Activated T-helper 1 cell treated with anti-CD3 and anti-CD28 coated beads, Interleukin-12 subunit alpha, Interleukin-12 subunit beta, Interleukin-2, Interleukin-4 antibody, amounts not matched to agents 30 ng/mL and 10 ng/mL and 1 ng/mL, durations not matched to agents 14 hours and 24 hours and 36 hours (primary cell): ENCODE measurements at regions of chr10 and their contacts with region 1.

Region 1: DNA sequence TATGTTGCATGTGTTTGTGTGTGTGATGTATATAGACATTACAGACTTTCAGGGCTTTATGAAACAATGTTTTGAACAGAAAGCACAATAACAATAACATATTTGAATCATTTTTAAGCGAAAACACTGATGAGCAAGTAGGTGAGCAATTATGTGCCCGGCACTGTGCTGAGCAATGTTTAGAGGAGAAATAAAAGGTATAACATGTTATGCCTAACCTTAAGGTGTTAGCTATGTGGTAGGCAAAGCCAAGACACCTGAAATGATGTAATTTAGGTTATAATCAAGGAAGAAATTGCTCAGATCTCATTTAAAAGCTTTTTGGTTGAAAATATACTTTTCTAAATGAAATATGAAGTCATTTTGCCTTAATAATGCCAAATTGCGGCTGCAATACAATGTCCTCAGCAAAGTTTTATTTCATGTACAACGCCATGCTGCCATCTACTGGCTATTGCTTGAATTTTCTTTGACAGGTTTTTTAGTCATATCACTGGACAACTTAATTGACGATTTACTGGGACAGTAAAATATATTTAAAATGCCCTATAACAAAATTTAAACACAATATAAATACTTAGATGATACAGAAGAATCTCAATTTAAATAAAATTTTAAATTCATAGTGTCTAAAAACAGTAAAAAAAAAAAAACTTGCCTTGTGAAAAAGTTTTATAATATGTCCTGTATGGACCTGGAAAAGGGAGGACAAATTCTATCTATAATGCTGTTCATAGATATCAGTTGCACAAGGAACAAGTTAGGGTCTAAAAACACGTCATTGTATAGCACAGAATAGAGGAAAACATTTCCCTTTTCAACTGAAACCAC is 131.1 kb upstream of the CDK1 start:
- DNase-seq: peak; percentile 18
- H3K4me3 Mint-ChIP-seq: no peak overlapping the region
- H3K27ac Mint-ChIP-seq: no peak overlapping the region
- H3K4me1 Mint-ChIP-seq: peaks cover 60% of the 10 kb centered on the region
- H3K27me3 Mint-ChIP-seq: no peaks in the 10 kb centered on the region

Region 2: DNA sequence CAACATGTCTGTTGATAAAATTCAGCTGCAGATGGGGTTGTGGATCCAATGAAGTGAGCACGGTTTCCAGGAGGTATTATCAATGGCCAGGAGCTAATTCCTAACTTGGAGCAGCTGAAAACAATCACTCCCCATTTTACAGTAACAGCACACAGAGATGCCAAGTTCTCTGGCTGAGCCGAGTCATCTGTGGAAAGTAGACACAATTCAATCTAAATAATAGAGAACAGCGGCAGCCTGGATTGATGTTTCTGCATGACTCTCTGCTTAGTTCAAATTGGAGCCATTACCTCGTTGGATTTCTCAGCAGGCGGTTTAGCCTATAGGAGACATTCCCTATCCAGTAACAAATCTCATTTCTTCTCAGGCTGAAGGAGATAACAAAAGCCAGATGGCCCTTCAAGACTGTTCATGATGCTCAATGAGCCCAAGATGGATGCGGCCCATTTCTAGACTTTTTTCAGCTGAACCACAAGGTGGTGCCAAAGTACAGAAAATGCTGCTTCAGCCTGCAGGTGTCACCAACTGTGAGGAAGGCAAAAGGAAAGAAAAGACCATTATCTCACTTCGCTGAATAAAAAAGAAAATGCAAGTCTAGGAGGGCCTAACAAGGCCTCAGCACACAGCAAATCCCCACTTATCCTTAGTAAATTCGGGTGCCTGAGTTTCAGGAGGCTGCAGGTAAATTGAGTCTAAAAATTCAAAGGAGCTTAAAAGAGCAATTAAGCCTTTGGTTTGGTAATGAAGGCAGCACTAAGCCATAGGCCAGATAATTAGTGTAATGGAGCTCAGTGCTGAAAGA is 1021.3 kb before region 1 on chr10:
- intact Hi-C with region 1: loop called (anchors 2 kb)
- DNase-seq: peak; percentile 36
- H3K4me3 Mint-ChIP-seq: no peak overlapping the region
- H3K27ac Mint-ChIP-seq: no peak overlapping the region
- H3K4me1 Mint-ChIP-seq: peaks cover 6% of the 10 kb centered on the region
- H3K27me3 Mint-ChIP-seq: peaks cover 18% of the 10 kb centered on the region

Region 3: DNA sequence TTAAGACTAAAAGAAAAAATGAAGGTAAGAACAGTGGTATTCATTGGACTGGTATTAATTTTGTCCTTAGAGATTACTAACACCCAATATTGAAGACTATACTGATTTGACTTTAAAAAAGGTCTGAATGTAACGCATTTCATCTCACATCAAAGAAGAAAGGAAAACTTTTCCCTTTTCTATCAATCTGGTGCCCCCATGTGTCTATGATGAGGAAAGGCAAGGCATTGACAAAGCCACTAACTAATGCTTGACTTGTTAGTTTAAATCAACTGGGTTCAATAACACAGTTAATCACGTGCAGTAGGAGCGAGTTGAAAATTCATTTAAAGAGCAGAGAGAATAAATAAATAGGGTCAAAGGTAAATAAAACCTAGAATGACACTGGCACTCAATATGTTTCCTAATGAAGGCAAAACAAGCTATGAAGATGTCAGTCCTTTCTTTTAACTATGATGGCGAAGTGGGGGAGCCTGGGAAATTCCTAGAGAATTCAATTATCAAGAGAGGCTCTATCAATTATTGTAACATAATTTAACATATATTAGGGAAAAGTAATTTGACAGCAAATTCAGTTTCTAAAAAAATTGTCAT is 438.4 kb before region 1 on chr10:
- intact Hi-C with region 1: loop called (anchors 1 kb)
- DNase-seq: no peak
- H3K4me3 Mint-ChIP-seq: no peak overlapping the region
- H3K27ac Mint-ChIP-seq: no peak overlapping the region
- H3K4me1 Mint-ChIP-seq: peaks cover 36% of the 10 kb centered on the region
- H3K27me3 Mint-ChIP-seq: no peaks in the 10 kb centered on the region

Region 4: DNA sequence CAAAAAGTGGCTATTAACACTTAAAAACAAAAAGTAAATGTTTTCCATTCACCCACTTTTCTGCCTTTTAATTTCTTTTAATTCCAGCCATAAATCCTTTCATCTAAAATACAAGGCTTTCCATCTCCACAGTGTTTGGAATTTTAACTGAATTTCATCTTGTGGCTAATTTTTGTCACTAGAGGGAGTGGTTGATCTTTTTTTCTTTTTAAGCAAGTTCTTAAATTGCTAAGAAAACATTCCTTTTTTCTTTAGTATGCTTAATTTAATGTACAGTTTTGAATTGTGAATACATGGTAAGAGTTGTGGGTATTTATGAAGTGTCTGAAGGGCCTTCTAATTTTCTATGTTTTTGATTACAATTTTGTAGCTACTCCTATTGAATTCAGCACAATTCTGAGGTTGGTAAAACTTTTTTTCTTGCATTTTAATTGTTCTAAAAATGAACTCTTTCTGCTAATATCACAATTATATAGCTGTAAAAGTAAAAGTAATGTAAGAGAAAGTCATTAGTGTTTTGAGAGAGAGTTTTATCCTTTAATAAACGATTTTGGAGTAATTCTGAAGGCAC is 202.6 kb before region 1 on chr10:
- intact Hi-C with region 1: loop called (anchors 1 kb)
- DNase-seq: no peak
- H3K4me3 Mint-ChIP-seq: no peak overlapping the region
- H3K27ac Mint-ChIP-seq: no peak overlapping the region
- H3K4me1 Mint-ChIP-seq: peaks cover 16% of the 10 kb centered on the region
- H3K27me3 Mint-ChIP-seq: peaks cover 2% of the 10 kb centered on the region

Region 5: GRCh38 chr10:60572511-60573194 is 74.5 kb before region 1 on chr10:
- intact Hi-C with region 1: loop called (anchors 2 kb)
- DNase-seq: peak; percentile 21
- H3K4me3 Mint-ChIP-seq: peak overlapping the region; percentile 92
- H3K27ac Mint-ChIP-seq: peak overlapping the region; percentile 87
- H3K4me1 Mint-ChIP-seq: peaks cover 68% of the 10 kb centered on the region
- H3K27me3 Mint-ChIP-seq: no peaks in the 10 kb centered on the region

Region 6: GRCh38 chr10:60611291-60611747 is 35.9 kb before region 1 on chr10:
- intact Hi-C with region 1: no loop called
- DNase-seq: no peak
- H3K4me3 Mint-ChIP-seq: peak overlapping the region; percentile 1
- H3K27ac Mint-ChIP-seq: peak overlapping the region; percentile 49
- H3K4me1 Mint-ChIP-seq: peaks cover 30% of the 10 kb centered on the region
- H3K27me3 Mint-ChIP-seq: no peaks in the 10 kb centered on the region

Region 7: GRCh38 chr10:60722623-60723022 is 75.4 kb after region 1 on chr10:
- intact Hi-C with region 1: no loop called
- DNase-seq: no peak
- H3K4me3 Mint-ChIP-seq: no peak overlapping the region
- H3K27ac Mint-ChIP-seq: peak overlapping the region; percentile 35
- H3K4me1 Mint-ChIP-seq: peaks cover 76% of the 10 kb centered on the region
- H3K27me3 Mint-ChIP-seq: no peaks in the 10 kb centered on the region

Region 8: DNA sequence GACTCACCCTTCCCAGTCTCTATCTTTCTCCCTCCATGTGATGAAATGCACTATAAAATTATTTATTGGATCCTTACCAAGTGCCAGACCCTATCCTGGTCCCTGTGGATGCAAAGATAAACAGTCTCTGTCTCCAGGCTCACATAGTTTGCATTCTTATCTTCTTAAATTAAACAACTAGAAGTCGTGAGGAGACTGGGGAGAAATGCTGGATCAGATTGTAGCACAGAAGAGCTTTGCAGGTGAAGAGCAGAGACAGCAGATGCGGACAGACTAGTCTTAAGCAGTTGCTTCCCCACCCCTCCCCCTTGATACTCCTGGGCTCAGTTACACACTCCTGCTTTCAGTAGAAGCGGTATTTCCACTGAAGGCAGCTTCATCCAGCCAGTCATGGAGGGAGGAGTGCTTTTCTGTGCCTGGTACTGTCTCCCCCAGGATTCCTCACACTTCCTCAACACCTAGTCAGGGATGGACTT is 110.3 kb after region 1 on chr10:
- intact Hi-C with region 1: no loop called
- DNase-seq: no peak
- H3K4me3 Mint-ChIP-seq: no peak overlapping the region
- H3K27ac Mint-ChIP-seq: no peak overlapping the region
- H3K4me1 Mint-ChIP-seq: peaks cover 4% of the 10 kb centered on the region
- H3K27me3 Mint-ChIP-seq: peaks cover 4% of the 10 kb centered on the region

Region 9: DNA sequence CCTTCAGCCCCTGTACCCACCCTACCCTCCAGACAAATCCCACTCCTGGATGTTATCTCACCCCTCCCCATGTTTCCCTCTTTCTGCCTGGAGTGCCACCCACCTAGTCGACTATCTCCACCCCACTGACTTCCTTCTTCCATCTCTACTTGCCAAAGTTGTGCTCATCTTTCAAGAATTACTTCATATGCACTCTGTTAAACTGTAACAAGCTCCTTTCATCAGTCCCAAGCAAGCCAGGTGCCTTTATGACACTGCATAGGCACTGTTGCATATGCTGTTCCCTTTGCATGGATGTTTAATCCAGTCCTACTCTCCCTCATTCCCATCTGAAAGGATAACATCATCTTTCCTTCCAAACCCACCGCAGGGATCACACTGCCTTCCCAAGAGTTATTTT is 122.2 kb after region 1 on chr10:
- intact Hi-C with region 1: loop called (anchors 1 kb)
- DNase-seq: no peak
- H3K4me3 Mint-ChIP-seq: no peak overlapping the region
- H3K27ac Mint-ChIP-seq: no peak overlapping the region
- H3K4me1 Mint-ChIP-seq: peaks cover 20% of the 10 kb centered on the region
- H3K27me3 Mint-ChIP-seq: peaks cover 2% of the 10 kb centered on the region

Region 10: GRCh38 chr10:60863796-60864195 is 216.6 kb after region 1 on chr10:
- intact Hi-C with region 1: no loop called
- DNase-seq: no peak
- H3K4me3 Mint-ChIP-seq: no peak overlapping the region
- H3K27ac Mint-ChIP-seq: no peak overlapping the region
- H3K4me1 Mint-ChIP-seq: no peaks in the 10 kb centered on the region
- H3K27me3 Mint-ChIP-seq: peaks cover 11% of the 10 kb centered on the region